ENCODE measurements at regions of chr19 and their contacts with region 1.

Region 1: GRCh38 chr19:35592226-35592625 is 6.3 kb downstream of the PMIS2 start:
- DNase-seq: peak; percentile 15 to 53
- H3K4me3 ChIP-seq: no peak overlapping the region
- H3K27ac ChIP-seq: no peak overlapping the region
- H3K4me1 ChIP-seq: no peaks in the 10 kb centered on the region
- H3K27me3 ChIP-seq: no peaks in the 10 kb centered on the region; a peak in 1 of 7 replicates
- CTCF ChIP-seq: peak; percentile 33 to 84 (median 77)
- EP300 ChIP-seq: no peak
- POLR2A ChIP-seq: no peak
- RAD21 ChIP-seq: peak; percentile 87 to 89

Region 2: GRCh38 chr19:35509861-35510625 is 82.2 kb before region 1 on chr19:
- CTCF ChIA-PET with region 1: interaction called, 10 read pairs
- POLR2A ChIA-PET with region 1: interaction called, 5 read pairs
- DNase-seq: peak; percentile 78 to 98
- H3K4me3 ChIP-seq: peak overlapping the region; percentile 77 to 99 (median 93)
- H3K27ac ChIP-seq: peak overlapping the region; percentile 92
- H3K4me1 ChIP-seq: peaks cover 0 to 25% (median 21%) of the 10 kb centered on the region in 4 experiments; a peak in 6 of 7 replicates
- H3K27me3 ChIP-seq: peaks cover 0 to 11% (median 6%) of the 10 kb centered on the region in 4 experiments; a peak in 3 of 7 replicates
- CTCF ChIP-seq: peak; percentile 94 to 97 (median 96)
- EP300 ChIP-seq: peak in 1 of 2 experiments; percentile 56; a peak in 1 of 3 replicates
- POLR2A ChIP-seq: peak; percentile 94
- RAD21 ChIP-seq: peak; percentile 71 to 80

Region 3: GRCh38 chr19:35557539-35558399 is 34.5 kb before region 1 on chr19:
- CTCF ChIA-PET with region 1: interaction called, 90 read pairs
- POLR2A ChIA-PET with region 1: interaction called, 4 read pairs
- DNase-seq: peak; percentile 86 to 99
- H3K4me3 ChIP-seq: peak overlapping the region; percentile 52 to 65 (median 62)
- H3K27ac ChIP-seq: no peak overlapping the region
- H3K4me1 ChIP-seq: peaks cover 0 to 6% (median 4%) of the 10 kb centered on the region in 4 experiments; a peak in 3 of 7 replicates
- H3K27me3 ChIP-seq: peaks cover 0 to 16% (median 12%) of the 10 kb centered on the region in 4 experiments; a peak in 5 of 7 replicates
- CTCF ChIP-seq: peak in 2 of 3 experiments; percentile 4 to 18; a peak in 1 of 4 replicates
- EP300 ChIP-seq: no peak
- POLR2A ChIP-seq: peak in 1 of 2 experiments; percentile 65; a peak in 1 of 3 replicates
- RAD21 ChIP-seq: peak in 1 of 2 experiments; percentile 12; a peak in 2 of 4 replicates

Region 4: DNA sequence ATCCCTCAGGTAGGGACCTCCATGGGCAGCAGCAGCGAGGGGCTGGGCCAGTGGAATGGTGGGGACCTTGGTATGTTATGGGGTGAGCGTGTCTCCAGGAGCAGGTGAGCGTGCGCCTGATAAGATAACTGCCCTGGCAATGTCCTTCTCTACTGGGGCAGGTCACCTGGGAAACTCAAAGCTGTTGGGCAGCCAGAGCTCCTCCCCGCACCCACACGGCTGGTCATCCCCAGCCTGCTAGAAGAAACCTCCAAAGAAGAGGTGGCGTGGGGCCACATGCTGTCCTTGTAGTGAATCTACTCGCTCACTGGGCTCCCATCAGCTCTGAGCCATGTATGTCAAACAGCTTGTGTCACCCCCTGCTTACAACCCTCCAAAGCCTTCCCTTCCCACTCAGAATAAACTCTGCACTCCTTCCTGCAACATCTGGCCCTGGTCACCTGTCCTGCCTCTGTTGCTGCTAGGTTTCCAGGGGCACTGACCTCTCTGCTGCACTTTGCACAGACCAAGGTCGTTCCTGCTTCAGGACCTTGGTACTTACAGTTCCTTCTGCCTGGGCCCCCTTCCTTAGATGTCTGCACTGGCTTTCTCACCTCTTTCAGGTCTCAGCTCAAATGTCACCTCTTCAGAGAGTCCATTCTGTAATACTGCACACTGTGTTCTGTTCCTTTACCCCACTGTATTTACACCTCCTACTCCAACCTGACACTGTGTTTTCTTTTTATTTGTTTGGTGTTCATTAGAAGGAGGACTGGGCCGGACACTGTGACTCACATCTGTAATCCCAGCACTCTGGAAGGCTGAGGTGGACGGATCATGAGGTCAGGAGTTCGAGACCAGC is 27.0 kb before region 1 on chr19:
- CTCF ChIA-PET with region 1: interaction called, 90 read pairs
- POLR2A ChIA-PET with region 1: interaction called, 4 read pairs
- DNase-seq: no peak
- H3K4me3 ChIP-seq: no peak overlapping the region
- H3K27ac ChIP-seq: no peak overlapping the region
- H3K4me1 ChIP-seq: peaks cover 0 to 4% (median 0%) of the 10 kb centered on the region in 4 experiments; a peak in 1 of 7 replicates
- H3K27me3 ChIP-seq: peaks cover 0 to 4% (median 2%) of the 10 kb centered on the region in 4 experiments; a peak in 5 of 7 replicates
- CTCF ChIP-seq: no peak
- EP300 ChIP-seq: no peak
- POLR2A ChIP-seq: no peak
- RAD21 ChIP-seq: no peak

Region 5: GRCh38 chr19:35612559-35613321 is 20.5 kb after region 1 on chr19 and contains the start of gene HAUS5:
- CTCF ChIA-PET with region 1: interaction called, 16 read pairs
- POLR2A ChIA-PET with region 1: interaction called, 16 read pairs
- DNase-seq: peak; percentile 81 to 99
- H3K4me3 ChIP-seq: peak within 1 kb of the TSS; percentile 84 to 90 (median 86)
- H3K27ac ChIP-seq: peak within 1 kb of the TSS; percentile 78
- H3K4me1 ChIP-seq: peaks cover 0 to 4% (median 2%) of the 10 kb centered on the region in 4 experiments; a peak in 4 of 7 replicates
- H3K27me3 ChIP-seq: peaks cover 0 to 3% (median 0%) of the 10 kb centered on the region in 4 experiments; a peak in 1 of 7 replicates
- CTCF ChIP-seq: no peak
- EP300 ChIP-seq: no peak
- POLR2A ChIP-seq: peak in 1 of 2 experiments; percentile 90; a peak in 2 of 3 replicates
- RAD21 ChIP-seq: peak in 1 of 2 experiments; percentile 12; a peak in 1 of 4 replicates
- total RNA-seq, gene HAUS5: 18.9 and 25.7 TPM in 2 replicates

Region 6: GRCh38 chr19:35636651-35637050 is 44.4 kb after region 1 on chr19:
- CTCF ChIA-PET with region 1: interaction called, 20 read pairs
- POLR2A ChIA-PET with region 1: no interaction called
- DNase-seq: no peak
- H3K4me3 ChIP-seq: no peak overlapping the region
- H3K27ac ChIP-seq: no peak overlapping the region
- H3K4me1 ChIP-seq: peaks cover 4 to 12% (median 7%) of the 10 kb centered on the region in 4 experiments
- H3K27me3 ChIP-seq: no peaks in the 10 kb centered on the region
- CTCF ChIP-seq: no peak
- EP300 ChIP-seq: no peak
- POLR2A ChIP-seq: no peak
- RAD21 ChIP-seq: no peak

Region 7: DNA sequence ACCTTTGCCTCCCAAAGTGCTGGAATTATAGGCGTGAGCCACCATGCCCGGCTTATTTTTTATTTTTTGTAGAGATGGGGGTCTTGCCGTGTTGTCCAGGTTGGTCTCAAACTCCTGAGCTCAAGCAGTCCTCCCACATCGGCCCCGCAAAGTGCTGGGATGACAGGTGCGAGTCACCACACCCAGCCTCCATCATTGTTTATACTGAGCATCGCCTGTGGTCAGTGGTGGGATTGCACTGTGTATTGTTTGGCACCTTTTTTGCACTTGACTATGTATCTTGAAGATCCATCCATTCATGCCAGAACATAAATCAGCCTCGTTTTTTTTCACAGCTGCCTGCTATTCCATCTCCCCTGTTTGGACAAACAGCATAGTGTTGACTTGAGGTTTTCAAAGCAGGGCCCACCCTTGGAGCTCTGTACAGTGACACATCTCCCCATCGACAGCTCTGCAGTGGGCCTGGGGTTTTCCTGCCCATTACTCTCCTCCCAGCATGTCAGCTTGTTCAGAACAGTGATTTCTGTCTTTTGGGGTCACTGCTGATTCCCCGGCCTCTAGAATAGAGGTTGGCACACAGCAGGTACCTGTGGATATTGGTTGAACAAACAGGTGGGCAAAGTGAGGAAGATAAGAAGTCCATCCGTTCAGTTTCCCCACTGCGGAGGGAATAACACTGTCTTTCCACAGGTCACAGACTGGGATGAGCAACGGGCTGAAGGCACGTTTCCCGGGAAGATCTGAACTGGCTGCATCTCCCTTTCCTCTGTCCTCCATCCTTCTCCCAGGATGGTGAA is 65.9 kb after region 1 on chr19:
- CTCF ChIA-PET with region 1: interaction called, 15 read pairs
- POLR2A ChIA-PET with region 1: no interaction called
- DNase-seq: no peak
- H3K4me3 ChIP-seq: no peak overlapping the region
- H3K27ac ChIP-seq: no peak overlapping the region
- H3K4me1 ChIP-seq: no peaks in the 10 kb centered on the region
- H3K27me3 ChIP-seq: no peaks in the 10 kb centered on the region
- CTCF ChIP-seq: peak in 2 of 3 experiments; percentile 18 to 34; a peak in 2 of 4 replicates
- EP300 ChIP-seq: no peak
- POLR2A ChIP-seq: no peak
- RAD21 ChIP-seq: peak in 1 of 2 experiments; percentile 2; a peak in 2 of 4 replicates

Measured in H1 (cell line).